ENCODE measurements at regions of chr7 and their contacts with region 1.

Region 1: DNA sequence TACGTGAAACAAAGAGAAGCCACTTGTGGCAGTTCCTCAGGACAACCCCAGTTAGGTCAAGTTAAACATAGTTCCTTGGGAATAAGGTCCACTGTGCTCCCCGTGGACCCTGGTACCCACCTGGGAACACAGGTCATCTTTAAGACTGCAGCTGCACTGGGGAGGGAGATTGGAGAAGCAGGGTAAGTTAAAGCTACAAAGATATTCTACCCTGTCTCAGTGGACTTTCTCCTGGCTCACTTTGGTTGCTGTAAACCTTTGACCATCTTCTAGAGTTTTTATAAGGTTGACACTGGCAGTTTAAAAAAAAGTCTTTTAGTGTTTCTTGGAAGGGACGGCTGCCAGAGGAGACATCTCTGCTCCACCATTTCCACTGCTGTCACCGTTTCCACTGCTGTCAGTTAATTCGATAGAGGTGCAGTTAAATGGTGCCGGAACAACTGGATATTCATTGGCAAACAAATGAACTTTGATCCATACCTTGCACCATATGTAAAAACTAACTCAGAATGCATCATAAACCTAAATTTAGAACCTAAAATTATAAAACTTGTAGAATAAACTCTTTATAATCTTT is 42.5 kb downstream of the LMTK2 start:
- DNase-seq: no peak
- H3K4me3 ChIP-seq: no peak overlapping the region
- H3K4me3 Mint-ChIP-seq: no peak overlapping the region
- H3K27ac Mint-ChIP-seq: no peak overlapping the region
- H3K4me1 ChIP-seq: peaks cover 5% of the 10 kb centered on the region; the same call in 1 of the 2 replicates
- H3K4me1 Mint-ChIP-seq: no peaks in the 10 kb centered on the region
- H3K27me3 ChIP-seq: no peaks in the 10 kb centered on the region
- H3K27me3 Mint-ChIP-seq: no peaks in the 10 kb centered on the region
- CTCF ChIP-seq: no peak

Region 2: DNA sequence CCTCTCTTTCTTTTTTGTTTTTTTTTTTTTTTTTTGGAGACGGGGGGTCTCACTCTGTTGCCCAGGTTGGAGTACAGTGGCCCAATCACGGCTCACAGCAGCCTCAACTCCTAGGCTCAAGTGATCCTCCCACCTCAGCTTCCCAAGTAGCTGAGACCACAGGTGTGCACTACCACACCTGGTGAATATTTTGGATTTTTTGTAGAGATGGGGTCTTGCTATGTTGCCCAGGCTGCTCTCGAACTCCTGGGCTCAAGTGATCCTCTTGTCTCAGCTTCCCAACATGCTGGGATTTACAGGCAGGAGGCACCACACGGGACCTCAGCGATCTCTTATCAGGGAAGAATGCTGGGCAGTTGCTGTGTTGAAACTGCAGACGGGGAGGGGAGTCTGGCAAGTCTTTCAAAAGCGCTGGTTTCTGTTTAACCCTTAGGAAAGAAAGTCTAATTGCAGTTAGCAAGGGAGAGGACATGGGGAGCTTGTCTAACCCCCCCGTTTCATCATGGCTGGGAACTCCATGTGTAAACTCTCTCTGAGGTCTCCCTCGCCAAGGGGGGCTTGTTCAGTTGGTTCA is 82.2 kb before region 1 on chr7:
- CTCF ChIA-PET with region 1: no interaction called
- POLR2A ChIA-PET with region 1: no interaction called
- intact Hi-C with region 1: no loop called
- DNase-seq: peak; percentile 71 to 81
- H3K4me3 ChIP-seq: no peak overlapping the region
- H3K4me3 Mint-ChIP-seq: no peak overlapping the region
- H3K27ac Mint-ChIP-seq: peak overlapping the region; percentile 69
- H3K4me1 ChIP-seq: no peaks in the 10 kb centered on the region
- H3K4me1 Mint-ChIP-seq: peaks cover 4% of the 10 kb centered on the region
- H3K27me3 ChIP-seq: no peaks in the 10 kb centered on the region
- H3K27me3 Mint-ChIP-seq: no peaks in the 10 kb centered on the region
- CTCF ChIP-seq: no peak

Region 3: GRCh38 chr7:98125759-98126158 is 23.4 kb before region 1 on chr7:
- CTCF ChIA-PET with region 1: no interaction called
- POLR2A ChIA-PET with region 1: no interaction called
- intact Hi-C with region 1: loop called (anchors 1 kb)
- DNase-seq: no peak
- H3K4me3 ChIP-seq: no peak overlapping the region
- H3K4me3 Mint-ChIP-seq: no peak overlapping the region
- H3K27ac Mint-ChIP-seq: no peak overlapping the region
- H3K4me1 ChIP-seq: peaks cover 6% of the 10 kb centered on the region
- H3K4me1 Mint-ChIP-seq: peaks cover 12% of the 10 kb centered on the region
- H3K27me3 ChIP-seq: no peaks in the 10 kb centered on the region
- H3K27me3 Mint-ChIP-seq: no peaks in the 10 kb centered on the region
- CTCF ChIP-seq: no peak

Region 4: DNA sequence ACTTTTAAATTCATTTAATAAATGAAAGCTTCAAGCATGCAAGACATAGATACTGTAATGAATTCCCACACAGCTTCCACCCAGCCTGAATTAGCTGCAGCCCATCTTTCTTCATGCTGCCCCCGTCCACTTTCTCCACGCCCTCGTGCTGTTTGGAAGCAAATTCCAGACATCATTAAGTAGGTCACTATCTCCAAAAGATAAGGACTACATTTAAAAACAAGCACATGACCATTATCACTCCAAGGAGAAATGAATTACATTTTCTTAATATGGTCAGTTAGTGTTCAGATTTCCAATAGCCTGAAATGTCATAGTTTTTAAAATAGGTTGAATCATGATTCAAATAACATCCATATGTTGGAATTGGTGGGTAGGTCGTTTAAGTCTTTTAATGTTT is 18.2 kb before region 1 on chr7:
- CTCF ChIA-PET with region 1: no interaction called
- POLR2A ChIA-PET with region 1: no interaction called
- intact Hi-C with region 1: loop called (anchors 2 kb)
- DNase-seq: no peak
- H3K4me3 ChIP-seq: no peak overlapping the region
- H3K4me3 Mint-ChIP-seq: peak overlapping the region; percentile 26
- H3K27ac Mint-ChIP-seq: peak overlapping the region; percentile 33
- H3K4me1 ChIP-seq: peaks cover 40% of the 10 kb centered on the region
- H3K4me1 Mint-ChIP-seq: peaks cover 32% of the 10 kb centered on the region
- H3K27me3 ChIP-seq: no peaks in the 10 kb centered on the region
- H3K27me3 Mint-ChIP-seq: no peaks in the 10 kb centered on the region
- CTCF ChIP-seq: no peak

Region 5: DNA sequence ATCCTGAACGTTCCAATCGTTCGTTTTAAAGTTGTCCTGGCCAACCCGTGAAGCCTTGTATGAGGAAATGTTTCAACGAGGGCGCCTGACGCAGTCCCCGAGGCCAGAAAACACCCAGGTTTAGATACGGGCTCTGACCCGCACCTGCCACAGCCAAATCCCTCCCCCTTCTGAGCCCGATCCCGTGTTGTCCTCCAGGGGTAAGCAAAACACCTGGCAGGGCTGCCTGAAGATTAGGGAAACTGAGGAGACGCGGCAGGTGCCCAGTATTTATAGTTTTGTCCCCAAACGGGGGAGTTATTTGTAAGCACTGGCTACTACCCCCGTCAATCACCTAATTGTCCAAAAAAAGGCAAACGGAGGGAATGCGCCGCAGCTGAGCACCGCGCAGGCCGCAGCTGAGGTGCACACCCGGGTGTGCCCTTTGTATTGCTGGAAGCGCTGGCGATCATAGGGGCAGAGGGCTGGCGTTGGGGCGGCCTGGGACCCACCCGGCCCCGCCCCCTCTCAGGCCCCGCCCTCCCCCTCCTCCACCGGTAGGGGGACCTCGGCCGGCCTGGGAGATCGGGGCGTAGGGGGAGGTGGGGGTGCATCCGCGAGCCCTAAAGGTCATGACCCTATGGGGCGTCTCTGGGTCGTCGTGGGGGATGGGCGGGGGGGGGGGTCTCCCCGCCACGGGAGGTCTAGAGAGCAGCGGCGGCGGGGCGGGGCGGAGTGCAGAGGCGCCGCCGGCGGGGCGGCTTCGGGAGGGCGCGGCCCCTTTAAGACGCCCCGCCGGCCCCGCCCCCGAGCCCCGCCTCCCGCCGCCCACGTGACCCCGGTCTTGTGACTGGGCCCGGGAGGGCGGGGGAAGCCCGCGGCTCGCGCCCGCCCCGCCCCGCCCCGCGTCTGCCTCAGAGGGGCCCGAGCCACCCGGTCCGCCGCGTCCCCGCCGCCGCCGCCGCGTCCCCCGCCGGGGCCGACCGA is 131.9 kb after region 1 on chr7 and contains the start of gene BRI3:
- CTCF ChIA-PET with region 1: no interaction called
- POLR2A ChIA-PET with region 1: no interaction called
- intact Hi-C with region 1: no loop called
- DNase-seq: peak; percentile 89 to 94
- H3K4me3 ChIP-seq: peak within 1 kb of the TSS; percentile 81
- H3K4me3 Mint-ChIP-seq: peak within 1 kb of the TSS; percentile 97
- H3K27ac Mint-ChIP-seq: peak within 1 kb of the TSS; percentile 91
- H3K4me1 ChIP-seq: peaks cover 44% of the 10 kb centered on the region
- H3K4me1 Mint-ChIP-seq: peaks cover 43% of the 10 kb centered on the region
- H3K27me3 ChIP-seq: no peaks in the 10 kb centered on the region
- H3K27me3 Mint-ChIP-seq: no peaks in the 10 kb centered on the region
- CTCF ChIP-seq: no peak
- total RNA-seq, gene BRI3: 197 and 224 TPM in 2 replicates